ENCODE measurements at regions of chrX and their contacts with region 1.

Region 1: DNA sequence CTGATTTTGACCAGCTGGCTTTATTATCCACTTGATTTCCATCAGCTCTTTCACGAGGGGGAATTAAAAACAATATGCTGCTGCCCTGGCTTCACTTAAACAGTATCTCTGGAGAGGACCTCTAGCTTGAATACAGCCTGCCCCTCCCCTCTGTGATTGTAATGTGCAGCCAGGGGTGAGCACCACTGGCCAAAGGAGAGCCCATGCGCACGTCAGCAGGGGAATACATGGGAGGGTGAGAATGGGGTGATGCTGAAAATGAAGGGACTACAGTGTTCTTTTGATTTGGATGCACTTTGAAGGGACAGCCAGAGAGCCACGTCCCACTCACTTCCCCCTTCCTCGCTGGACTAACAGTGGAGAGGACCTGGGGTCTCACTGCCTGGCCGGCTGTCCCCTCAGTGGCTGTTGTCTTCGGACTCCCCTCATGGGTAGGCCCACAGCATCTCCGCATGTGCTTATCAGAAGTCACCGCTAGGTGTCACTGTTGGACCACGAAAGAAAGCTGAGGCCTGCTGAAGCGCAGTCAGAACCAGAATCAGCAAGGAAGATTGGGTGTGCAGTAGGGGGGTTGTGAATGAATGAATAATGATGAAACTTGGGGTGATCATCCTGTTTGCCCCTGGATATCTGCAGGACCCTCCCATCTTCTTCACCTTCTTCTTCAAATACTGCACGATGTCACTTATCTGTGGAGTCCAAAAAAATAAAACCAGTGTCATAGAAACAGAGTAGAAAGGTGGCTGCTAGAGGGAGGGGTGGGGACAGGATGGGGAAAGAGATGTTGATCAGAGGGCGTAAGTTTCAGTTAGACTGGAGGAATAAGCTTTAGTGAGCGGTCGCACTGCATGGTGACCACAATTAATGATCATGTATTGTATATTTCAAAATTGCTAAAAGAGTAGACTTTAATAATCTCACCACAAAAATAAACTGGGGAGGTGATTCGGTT is 32.8 kb downstream of the CLCN4 start:
- DNase-seq: peak; percentile 12 to 81 (median 58)
- ATAC-seq: peak in 3 of 4 experiments; percentile 53 to 66 (median 64)
- H3K4me3 ChIP-seq: no peak overlapping the region
- H3K4me3 Mint-ChIP-seq: no peak overlapping the region
- H3K27ac ChIP-seq: no peak overlapping the region
- H3K27ac Mint-ChIP-seq: no peak overlapping the region
- H3K4me1 ChIP-seq: no peaks in the 10 kb centered on the region
- H3K4me1 Mint-ChIP-seq: peaks cover 0 to 3% (median 0%) of the 10 kb centered on the region in 3 donors
- H3K27me3 ChIP-seq: peaks cover 0 to 6% of the 10 kb centered on the region in 2 experiments
- H3K27me3 Mint-ChIP-seq: peaks cover 14 to 29% of the 10 kb centered on the region in 2 donors

Region 2: DNA sequence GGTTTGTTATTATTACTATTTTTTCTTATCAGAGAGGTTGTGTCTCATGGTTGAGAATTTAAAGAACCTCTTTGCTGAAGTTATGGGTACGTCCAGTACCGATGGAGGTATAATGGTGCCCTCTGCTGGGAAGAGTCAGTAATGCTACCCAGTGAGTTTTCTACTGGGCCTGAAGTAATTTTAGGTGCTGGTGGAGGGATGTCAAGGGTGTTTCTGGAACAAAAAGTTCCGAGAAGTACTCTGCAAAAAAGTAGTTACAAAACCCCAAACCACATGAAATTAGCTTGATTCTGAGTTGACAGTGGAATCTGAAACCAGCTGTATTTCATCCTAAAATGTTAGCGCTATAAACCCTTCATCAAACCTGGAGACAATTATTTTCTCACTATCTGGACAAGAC is 533.3 kb after region 1 on chrX:
- CTCF ChIA-PET with region 1: interaction called, 7 to 13 read pairs
- POLR2A ChIA-PET with region 1: no interaction called
- DNase-seq: peak in 13 of 35 experiments; percentile 0 to 38 (median 8)
- ATAC-seq: no peak
- H3K4me3 ChIP-seq: no peak overlapping the region
- H3K4me3 Mint-ChIP-seq: no peak overlapping the region
- H3K27ac ChIP-seq: no peak overlapping the region
- H3K27ac Mint-ChIP-seq: no peak overlapping the region
- H3K4me1 ChIP-seq: no peaks in the 10 kb centered on the region
- H3K4me1 Mint-ChIP-seq: no peaks in the 10 kb centered on the region
- H3K27me3 ChIP-seq: no peaks in the 10 kb centered on the region
- H3K27me3 Mint-ChIP-seq: peaks cover 0 to 6% of the 10 kb centered on the region in 2 donors

Region 3: GRCh38 chrX:11137543-11138139 is 948.0 kb after region 1 on chrX:
- CTCF ChIA-PET with region 1: interaction called, 15 to 21 read pairs
- POLR2A ChIA-PET with region 1: no interaction called
- DNase-seq: peak in 2 of 35 experiments; percentile 3 to 63
- ATAC-seq: no peak
- H3K4me3 ChIP-seq: no peak overlapping the region
- H3K4me3 Mint-ChIP-seq: no peak overlapping the region
- H3K27ac ChIP-seq: no peak overlapping the region
- H3K27ac Mint-ChIP-seq: no peak overlapping the region
- H3K4me1 ChIP-seq: peaks cover 0 to 2% of the 10 kb centered on the region in 2 experiments
- H3K4me1 Mint-ChIP-seq: peaks cover 0 to 5% (median 0%) of the 10 kb centered on the region in 3 donors
- H3K27me3 ChIP-seq: peaks cover 0 to 5% of the 10 kb centered on the region in 2 experiments
- H3K27me3 Mint-ChIP-seq: peaks cover 8 to 10% of the 10 kb centered on the region in 2 donors